Activated T-helper 2 cell treated with anti-CD3 and anti-CD28 coated beads, Interferon-gamma antibody, Interleukin-2, Interleukin-4, amounts not matched to agents 10 μg/mL and 5 μg/mL and 100 μg/mL, durations not matched to agents 14 hours and 24 hours and 36 hours (primary cell): ENCODE measurements at regions of chr10 and their contacts with region 1.

Region 1: GRCh38 chr10:46019569-46020343 is 10.7 kb downstream of the NCOA4 start:
- DNase-seq: no peak
- H3K4me3 Mint-ChIP-seq: no peak overlapping the region
- H3K27ac Mint-ChIP-seq: peak overlapping the region; percentile 51
- H3K4me1 Mint-ChIP-seq: peaks cover 50% of the 10 kb centered on the region
- H3K27me3 Mint-ChIP-seq: no peaks in the 10 kb centered on the region

Region 2: GRCh38 chr10:46004963-46005362 is 14.8 kb before region 1 on chr10:
- intact Hi-C with region 1: loop called (anchors 1 kb)
- DNase-seq: no peak
- H3K4me3 Mint-ChIP-seq: no peak overlapping the region
- H3K27ac Mint-ChIP-seq: no peak overlapping the region
- H3K4me1 Mint-ChIP-seq: no peaks in the 10 kb centered on the region
- H3K27me3 Mint-ChIP-seq: no peaks in the 10 kb centered on the region

Region 3: GRCh38 chr10:46030091-46030937 is 10.6 kb after region 1 on chr10 and contains the start of gene NCOA4:
- intact Hi-C with region 1: no loop called
- DNase-seq: peak; percentile 96
- H3K4me3 Mint-ChIP-seq: peak within 1 kb of the TSS; percentile 97
- H3K27ac Mint-ChIP-seq: peak within 1 kb of the TSS; percentile 93
- H3K4me1 Mint-ChIP-seq: peaks cover 40% of the 10 kb centered on the region
- H3K27me3 Mint-ChIP-seq: peaks cover under 1% of the 10 kb centered on the region
- total RNA-seq, gene NCOA4: 98.7 and 103 TPM in 2 replicates

Region 4: GRCh38 chr10:46050941-46051623 is 31.3 kb after region 1 on chr10:
- intact Hi-C with region 1: no loop called
- DNase-seq: no peak
- H3K4me3 Mint-ChIP-seq: no peak overlapping the region
- H3K27ac Mint-ChIP-seq: no peak overlapping the region
- H3K4me1 Mint-ChIP-seq: peaks cover 8% of the 10 kb centered on the region
- H3K27me3 Mint-ChIP-seq: peaks cover 7% of the 10 kb centered on the region